ENCODE measurements at regions of chr3 and their contacts with region 1.

Region 1: DNA sequence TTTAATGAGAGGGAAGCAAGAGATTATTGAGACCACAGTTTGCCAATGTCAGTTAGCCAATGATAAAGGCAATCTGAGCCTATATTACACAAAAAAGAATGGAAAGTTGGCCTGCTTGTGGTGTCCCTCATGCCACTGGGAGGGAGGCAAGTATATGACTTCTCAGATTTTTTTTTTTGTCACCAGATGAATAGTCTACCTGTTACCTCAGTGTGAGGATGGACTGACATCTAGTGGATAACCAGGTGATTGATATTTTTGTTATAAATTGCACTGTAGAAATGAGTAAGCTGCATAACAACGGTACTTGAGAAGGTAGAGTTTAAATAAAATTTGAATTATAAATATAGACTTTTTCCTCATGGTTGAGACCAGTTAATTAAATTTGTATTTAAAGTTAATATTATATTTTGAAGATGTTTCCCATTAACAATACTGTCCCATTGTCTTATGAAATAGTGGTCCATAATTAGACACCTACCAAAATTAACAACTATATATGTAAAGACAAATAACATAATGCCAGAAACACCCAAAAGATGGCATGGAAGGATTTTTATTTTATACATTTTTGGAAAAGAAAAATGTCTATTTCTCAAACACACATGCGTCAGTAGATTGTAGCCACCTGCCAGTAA is 237.8 kb upstream of the GADL1 start:
- DNase-seq: peak; percentile 65
- H3K4me3 Mint-ChIP-seq: no peak overlapping the region
- H3K27ac Mint-ChIP-seq: no peak overlapping the region
- H3K4me1 Mint-ChIP-seq: no peaks in the 10 kb centered on the region
- H3K27me3 Mint-ChIP-seq: no peaks in the 10 kb centered on the region
- CTCF ChIP-seq: peak; percentile 77

Region 2: DNA sequence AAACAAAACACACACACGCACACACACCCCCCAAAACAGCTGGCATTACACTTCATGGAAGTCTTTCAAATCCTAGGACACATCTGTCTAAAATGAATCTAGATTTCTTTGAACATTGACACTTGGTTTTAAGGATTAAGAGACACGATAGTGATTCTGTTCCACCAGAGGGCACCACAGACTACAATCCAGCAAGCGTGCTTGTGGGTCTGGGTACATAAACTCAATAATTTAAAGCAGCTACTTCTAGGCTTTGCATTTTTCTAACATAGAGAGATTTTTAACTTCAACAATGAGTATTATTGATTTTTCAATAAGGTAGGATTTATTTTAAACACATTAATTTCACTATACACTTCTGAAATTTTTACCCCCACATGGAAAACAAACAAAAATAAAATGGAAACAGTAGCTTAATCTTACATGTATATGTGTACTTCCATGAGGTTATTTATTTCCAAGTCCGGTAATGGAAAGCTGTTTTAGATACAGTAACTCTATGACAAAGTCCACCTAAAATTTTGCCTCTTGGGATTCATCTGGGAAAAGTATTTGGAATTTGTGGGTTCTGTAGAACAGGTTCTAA is 1089.9 kb before region 1 on chr3:
- CTCF ChIA-PET with region 1: interaction called, 7 read pairs
- POLR2A ChIA-PET with region 1: no interaction called
- intact Hi-C with region 1: loop called (anchors 10 kb)
- DNase-seq: peak; percentile 80
- H3K4me3 Mint-ChIP-seq: no peak overlapping the region
- H3K27ac Mint-ChIP-seq: no peak overlapping the region
- H3K4me1 Mint-ChIP-seq: no peaks in the 10 kb centered on the region
- H3K27me3 Mint-ChIP-seq: no peaks in the 10 kb centered on the region
- CTCF ChIP-seq: peak; percentile 86

Region 3: GRCh38 chr3:30768703-30769685 is 363.3 kb before region 1 on chr3:
- CTCF ChIA-PET with region 1: interaction called, 45 read pairs
- POLR2A ChIA-PET with region 1: interaction called, 9 read pairs
- intact Hi-C with region 1: loop called (anchors 1 kb)
- DNase-seq: peak; percentile 67
- H3K4me3 Mint-ChIP-seq: no peak overlapping the region
- H3K27ac Mint-ChIP-seq: no peak overlapping the region
- H3K4me1 Mint-ChIP-seq: peaks cover 12% of the 10 kb centered on the region
- H3K27me3 Mint-ChIP-seq: no peaks in the 10 kb centered on the region
- CTCF ChIP-seq: peak; percentile 80

Region 4: GRCh38 chr3:30970183-30970582 is 162.1 kb before region 1 on chr3:
- CTCF ChIA-PET with region 1: interaction called, 11 read pairs
- POLR2A ChIA-PET with region 1: interaction called, 4 read pairs
- intact Hi-C with region 1: loop called (anchors 1 kb)
- DNase-seq: peak; percentile 60
- H3K4me3 Mint-ChIP-seq: no peak overlapping the region
- H3K27ac Mint-ChIP-seq: no peak overlapping the region
- H3K4me1 Mint-ChIP-seq: peaks cover 6% of the 10 kb centered on the region
- H3K27me3 Mint-ChIP-seq: no peaks in the 10 kb centered on the region
- CTCF ChIP-seq: peak; percentile 40

Measured in MCF 10A (cell line).